Cardiac septum (tissue), 1 donor: ENCODE measurements at regions of chr19 and their contacts with region 1.

Region 1: DNA sequence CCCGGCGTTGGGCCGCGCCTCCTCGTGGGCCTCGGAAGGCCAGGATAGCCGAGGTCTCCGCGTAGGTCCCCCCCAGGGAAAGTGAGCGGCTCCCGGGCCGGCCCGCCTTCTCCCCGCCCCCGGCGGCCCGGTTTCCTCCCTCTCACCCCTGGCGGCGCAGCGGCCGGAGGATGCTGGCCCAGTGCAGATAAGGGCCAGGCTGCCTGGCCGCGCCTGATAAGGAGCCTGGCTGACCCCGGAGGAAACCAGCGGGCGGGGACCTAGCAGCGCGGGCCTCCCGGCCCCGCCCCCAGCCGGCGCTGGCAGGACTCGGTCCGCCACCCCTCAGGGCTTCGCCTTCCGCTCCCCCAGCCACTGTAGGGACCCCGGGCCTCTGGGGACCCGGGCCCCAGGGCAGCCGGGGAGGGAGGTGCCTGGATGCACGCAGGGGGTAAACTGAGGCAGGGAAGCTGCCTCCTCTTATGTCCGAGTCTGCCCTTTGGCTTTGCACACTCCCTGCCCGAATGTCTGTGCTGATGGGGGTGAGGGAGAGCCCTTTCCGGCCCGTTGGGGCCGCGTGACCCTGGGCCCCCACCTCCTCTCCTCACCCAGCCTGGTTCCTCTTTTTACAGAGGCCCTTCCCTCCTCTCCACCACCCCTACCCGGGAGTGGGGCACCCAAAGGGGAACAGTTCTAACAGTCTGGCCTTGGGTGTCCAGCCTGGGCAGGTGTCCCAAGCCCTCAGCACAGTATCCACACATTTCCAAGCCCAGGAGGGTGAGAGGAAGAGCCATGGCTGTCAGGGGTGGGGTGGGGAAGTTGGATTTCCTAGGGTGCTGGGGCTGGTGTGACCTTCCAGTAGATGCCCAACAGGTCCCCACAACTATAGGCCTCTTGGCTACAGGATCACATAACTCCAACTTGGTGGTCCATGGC is at the start of gene LYL1:
- DNase-seq: peak; percentile 96
- total RNA-seq, gene LYL1: 9.4 TPM

Region 2: GRCh38 chr19:13117772-13118423 is 15.0 kb after region 1 on chr19 and contains the start of gene NACC1:
- intact Hi-C with region 1: loop called (anchors 2 kb)
- DNase-seq: peak; percentile 96
- total RNA-seq, gene NACC1: 33.8 TPM

Region 3: GRCh38 chr19:13162518-13163314 is 59.8 kb after region 1 on chr19:
- intact Hi-C with region 1: loop called (anchors 2 kb)
- DNase-seq: peak; percentile 99

Region 4: GRCh38 chr19:13302526-13303270 is 199.8 kb after region 1 on chr19:
- intact Hi-C with region 1: no loop called
- DNase-seq: no peak